Vagina (tissue), 2 donors: ENCODE measurements at regions of chr6 and their contacts with region 1.

Region 1: DNA sequence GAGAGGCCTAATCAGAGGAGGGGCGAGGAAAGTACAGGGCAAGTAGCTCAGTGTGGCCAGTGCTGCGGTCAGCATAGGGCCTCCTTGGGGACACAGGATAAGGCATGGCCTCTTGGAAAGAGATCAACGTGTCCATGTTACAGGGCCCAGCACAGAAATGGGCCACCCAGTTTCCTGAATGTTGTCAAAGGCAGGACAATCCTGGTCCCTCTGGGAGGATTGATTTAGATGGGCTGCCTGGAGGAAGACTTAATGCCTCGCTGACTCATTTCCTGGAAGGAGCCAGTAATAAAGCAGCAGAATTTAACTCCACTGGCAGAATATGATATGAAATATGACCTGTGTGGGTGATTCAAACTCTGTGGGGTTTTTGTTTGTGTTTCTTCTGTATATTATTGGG is 16.6 kb downstream of the DDO start:
- DNase-seq: no peak
- H3K4me3 ChIP-seq: no peak overlapping the region
- H3K27ac ChIP-seq: no peak overlapping the region
- H3K4me1 ChIP-seq: no peaks in the 10 kb centered on the region
- H3K27me3 ChIP-seq: no peaks in the 10 kb centered on the region
- CTCF ChIP-seq: no peak
- POLR2A ChIP-seq: no peak

Region 2: DNA sequence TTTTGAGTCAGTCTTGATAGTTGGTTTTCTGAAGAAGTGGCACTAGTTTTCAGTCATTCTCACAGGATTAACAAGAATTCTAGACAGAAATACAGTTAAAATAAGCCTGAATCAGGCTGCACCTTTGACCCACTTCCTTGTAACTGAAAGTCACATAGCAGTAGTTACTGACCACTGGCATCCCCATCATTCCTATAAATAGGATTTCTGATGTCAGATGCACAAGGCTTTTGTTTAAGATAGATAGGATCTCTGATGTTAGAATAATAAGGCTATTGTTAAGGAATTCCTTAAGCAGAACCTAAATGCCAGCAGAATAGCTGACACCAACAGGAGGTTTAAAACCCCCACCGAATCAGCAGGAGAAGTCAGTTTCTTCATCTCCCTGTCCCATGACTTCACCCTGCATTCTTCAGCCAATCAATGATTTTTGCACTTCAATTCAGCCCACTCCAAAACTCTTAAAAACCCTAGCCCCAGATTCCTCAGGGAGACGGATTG is 885.2 kb before region 1 on chr6:
- intact Hi-C with region 1: no loop called
- DNase-seq: no peak
- H3K4me3 ChIP-seq: no peak overlapping the region
- H3K27ac ChIP-seq: no peak overlapping the region
- H3K4me1 ChIP-seq: no peaks in the 10 kb centered on the region
- H3K27me3 ChIP-seq: no peaks in the 10 kb centered on the region
- CTCF ChIP-seq: no peak
- POLR2A ChIP-seq: no peak

Region 3: GRCh38 chr6:110179401-110180227 is 219.2 kb before region 1 on chr6 and contains the start of gene WASF1:
- intact Hi-C with region 1: loop called (anchors 10 kb)
- DNase-seq: peak in 1 of 2 donors; percentile 98
- H3K4me3 ChIP-seq: peak within 1 kb of the TSS; percentile 86 to 91
- H3K27ac ChIP-seq: peak within 1 kb of the TSS; percentile 81
- H3K4me1 ChIP-seq: peaks cover 38% of the 10 kb centered on the region
- H3K27me3 ChIP-seq: no peaks in the 10 kb centered on the region
- CTCF ChIP-seq: no peak
- POLR2A ChIP-seq: peak in 1 of 2 donors; percentile 48
- total RNA-seq, gene WASF1: 20.1 TPM